ENCODE measurements at regions of chr13 and their contacts with region 1.

Region 1: GRCh38 chr13:32381539-32381938 is 46.4 kb downstream of the N4BP2L1 start:
- DNase-seq: peak; percentile 49
- ATAC-seq: peak; percentile 89
- H3K4me3 ChIP-seq: no peak overlapping the region
- H3K27ac ChIP-seq: no peak overlapping the region
- H3K4me1 ChIP-seq: no peaks in the 10 kb centered on the region
- H3K27me3 ChIP-seq: no peaks in the 10 kb centered on the region
- CTCF ChIP-seq: peak; percentile 81
- EP300 ChIP-seq: no peak
- POLR2A ChIP-seq: no peak
- RAD21 ChIP-seq: peak; percentile 53; the same call in 1 of the 2 replicates

Region 2: DNA sequence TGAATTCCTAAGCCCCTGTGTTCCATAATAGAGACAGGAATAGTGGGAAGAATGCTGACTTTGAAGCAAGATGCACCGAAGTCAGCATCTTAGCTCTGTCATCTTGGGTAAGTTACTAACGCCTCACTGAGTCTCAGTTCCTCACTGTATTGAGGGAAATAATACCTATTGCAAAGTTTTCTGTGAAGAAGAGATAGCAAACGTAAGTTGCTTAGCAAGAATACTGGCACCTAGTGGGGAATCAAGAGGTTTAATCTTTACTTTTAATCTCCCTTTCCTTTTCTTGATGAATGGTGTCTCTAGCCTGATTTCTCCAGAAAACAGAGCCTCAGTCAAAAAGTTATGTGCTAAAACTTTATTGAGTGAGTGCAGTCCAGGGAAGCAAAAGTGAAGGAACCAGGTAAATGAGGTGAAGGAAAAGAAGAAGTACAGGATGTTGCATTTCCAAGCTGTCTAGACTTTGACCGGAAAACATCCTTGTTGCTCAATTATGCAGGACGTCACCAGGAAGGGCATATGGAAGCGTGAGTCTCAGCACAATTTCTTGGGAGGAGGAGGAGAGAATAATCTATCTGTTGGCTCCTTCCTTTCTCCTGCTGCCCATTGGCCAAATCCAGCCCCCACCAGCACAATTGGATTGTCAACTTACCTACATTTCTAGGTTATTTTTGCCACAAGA is 971.7 kb before region 1 on chr13:
- CTCF ChIA-PET with region 1: no interaction called
- POLR2A ChIA-PET with region 1: no interaction called
- in situ Hi-C with region 1: no loop called
- intact Hi-C with region 1: no loop called
- DNase-seq: no peak
- ATAC-seq: no peak
- H3K4me3 ChIP-seq: no peak overlapping the region
- H3K27ac ChIP-seq: no peak overlapping the region
- H3K4me1 ChIP-seq: no peaks in the 10 kb centered on the region
- H3K27me3 ChIP-seq: peaks cover 0 to 3% of the 10 kb centered on the region in 2 experiments; a peak in 1 of 5 replicates
- CTCF ChIP-seq: no peak
- EP300 ChIP-seq: no peak
- POLR2A ChIP-seq: no peak
- RAD21 ChIP-seq: no peak

Region 3: GRCh38 chr13:32443111-32443510 is 61.6 kb after region 1 on chr13:
- CTCF ChIA-PET with region 1: interaction called, 7 read pairs
- POLR2A ChIA-PET with region 1: no interaction called
- in situ Hi-C with region 1: no loop called
- intact Hi-C with region 1: loop called (anchors 1 kb)
- DNase-seq: peak; percentile 69
- ATAC-seq: peak; percentile 71
- H3K4me3 ChIP-seq: no peak overlapping the region
- H3K27ac ChIP-seq: no peak overlapping the region
- H3K4me1 ChIP-seq: peaks cover 56% of the 10 kb centered on the region
- H3K27me3 ChIP-seq: no peaks in the 10 kb centered on the region
- CTCF ChIP-seq: peak; percentile 70
- EP300 ChIP-seq: no peak
- POLR2A ChIP-seq: no peak
- RAD21 ChIP-seq: peak; percentile 62; the same call in 1 of the 2 replicates

Region 4: DNA sequence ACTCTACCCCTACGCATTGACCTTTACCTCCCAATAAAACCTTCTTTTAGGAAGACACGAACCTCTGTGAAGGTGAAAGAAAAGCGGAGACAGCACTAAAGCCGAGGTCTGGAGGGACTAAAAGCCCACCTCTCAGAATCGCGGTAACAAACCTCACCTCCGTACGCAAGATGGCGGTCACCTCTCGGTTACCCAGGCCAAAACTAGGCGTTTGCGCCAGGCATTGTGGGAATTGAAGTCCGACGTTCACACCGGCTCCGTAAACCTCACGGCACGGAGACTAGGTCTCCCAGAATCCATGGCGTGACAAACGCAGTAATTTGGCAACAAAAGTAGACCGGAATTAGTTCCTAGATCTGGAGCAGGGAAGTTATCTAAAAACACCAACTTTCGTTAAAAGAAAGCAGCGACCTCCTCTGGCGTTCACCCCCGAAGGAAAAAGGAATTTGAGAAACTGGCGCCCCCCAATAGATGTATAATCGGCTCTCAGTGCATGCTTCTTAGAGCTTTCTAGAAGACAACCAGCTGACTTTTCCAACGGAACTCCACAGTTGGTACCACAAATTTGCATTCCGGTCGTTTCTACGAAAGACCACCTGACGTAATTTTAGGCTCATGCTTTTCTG is 157.2 kb after region 1 on chr13 and contains the start of gene N4BP2L2:
- CTCF ChIA-PET with region 1: no interaction called
- POLR2A ChIA-PET with region 1: no interaction called
- in situ Hi-C with region 1: no loop called
- intact Hi-C with region 1: loop called (anchors 2 kb)
- DNase-seq: peak; percentile 96
- ATAC-seq: peak; percentile 99
- H3K4me3 ChIP-seq: peak within 1 kb of the TSS; percentile 80 to 85 (median 84)
- H3K27ac ChIP-seq: peak within 1 kb of the TSS; percentile 94
- H3K4me1 ChIP-seq: peaks cover 36% of the 10 kb centered on the region
- H3K27me3 ChIP-seq: no peaks in the 10 kb centered on the region; a peak in 1 of 5 replicates
- CTCF ChIP-seq: peak; percentile 78
- EP300 ChIP-seq: 0 out of 4 replicates have a peak, but pooled peaks of 1 of the 2 experiments have one; percentile 35
- POLR2A ChIP-seq: peak; percentile 77 to 79
- RAD21 ChIP-seq: peak; percentile 12; the same call in 1 of the 2 replicates
- total RNA-seq, gene N4BP2L2: 81.2 and 82.6 TPM in 2 replicates

Region 5: DNA sequence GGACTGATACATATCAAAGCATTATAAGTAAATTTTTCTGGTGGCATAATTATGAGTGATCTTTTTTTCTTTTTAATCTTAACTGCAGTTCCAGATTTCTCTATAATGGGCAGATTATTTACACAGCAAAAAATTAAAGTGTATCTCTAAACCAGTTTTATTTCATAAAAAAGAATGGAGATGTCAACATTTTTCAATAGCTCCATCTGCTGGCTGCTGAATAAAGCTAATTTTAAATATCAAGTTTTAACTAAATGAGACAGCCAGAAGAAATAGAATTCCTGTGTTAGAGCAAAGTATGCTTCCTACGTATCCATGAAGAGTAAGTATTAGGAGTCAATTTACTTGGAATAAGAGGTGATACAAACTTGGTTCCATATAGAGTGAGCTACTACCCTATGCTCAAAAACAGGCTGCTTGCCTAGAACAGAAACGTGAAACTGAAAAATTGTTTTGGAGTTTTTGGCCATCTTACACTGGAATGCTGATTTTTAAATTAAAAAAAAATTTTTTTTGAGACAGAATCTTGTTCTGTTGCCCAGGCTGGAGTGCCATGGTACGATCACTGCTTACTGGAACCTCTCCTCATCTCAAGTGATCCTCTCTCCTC is 199.7 kb after region 1 on chr13:
- CTCF ChIA-PET with region 1: no interaction called
- POLR2A ChIA-PET with region 1: no interaction called
- in situ Hi-C with region 1: no loop called
- intact Hi-C with region 1: loop called (anchors 5 kb)
- DNase-seq: peak; percentile 14
- ATAC-seq: no peak
- H3K4me3 ChIP-seq: no peak overlapping the region
- H3K27ac ChIP-seq: no peak overlapping the region
- H3K4me1 ChIP-seq: peaks cover 7% of the 10 kb centered on the region; the same call in 1 of the 2 replicates
- H3K27me3 ChIP-seq: no peaks in the 10 kb centered on the region
- CTCF ChIP-seq: peak; percentile 38
- EP300 ChIP-seq: no peak
- POLR2A ChIP-seq: no peak
- RAD21 ChIP-seq: no peak